Activated CD8-positive, alpha-beta T cell treated with anti-CD3 and anti-CD28 coated beads, Interleukin-2, amount 10 ng/mL, durations not matched to agents 7 days and 5 days (primary cell): ENCODE measurements at regions of chr16 and their contacts with region 1.

Region 1: GRCh38 chr16:22001591-22001990 is 675 bp upstream of the PDZD9 start:
- DNase-seq: no peak
- ATAC-seq: no peak
- H3K4me3 Mint-ChIP-seq: no peak overlapping the region
- H3K27ac Mint-ChIP-seq: no peak overlapping the region
- H3K4me1 Mint-ChIP-seq: peaks cover 11% of the 10 kb centered on the region
- H3K27me3 Mint-ChIP-seq: no peaks in the 10 kb centered on the region

Region 2: DNA sequence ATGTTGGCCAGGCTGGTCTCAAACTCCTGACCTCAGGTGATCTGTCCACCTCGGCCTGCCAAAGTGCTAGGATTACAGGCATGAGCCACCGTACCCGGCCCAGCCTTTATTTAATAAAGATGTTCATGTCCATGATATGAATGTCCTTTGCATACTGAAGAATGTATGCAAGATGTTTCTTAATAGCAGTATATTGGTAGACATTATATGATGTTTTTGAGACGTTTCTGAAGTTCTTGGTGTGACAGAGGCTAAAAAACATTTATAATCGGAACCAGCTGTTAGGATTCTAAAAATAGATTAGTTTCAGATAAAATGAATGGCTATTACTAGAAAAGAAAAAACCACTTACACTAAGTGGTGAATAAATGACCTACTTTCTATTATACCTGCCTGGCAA is 12.5 kb before region 1 on chr16:
- CTCF ChIA-PET with region 1: interaction called, 15 read pairs
- POLR2A ChIA-PET with region 1: no interaction called
- DNase-seq: no peak
- ATAC-seq: no peak
- H3K4me3 Mint-ChIP-seq: no peak overlapping the region
- H3K27ac Mint-ChIP-seq: no peak overlapping the region
- H3K4me1 Mint-ChIP-seq: peaks cover 12% of the 10 kb centered on the region
- H3K27me3 Mint-ChIP-seq: no peaks in the 10 kb centered on the region

Region 3: GRCh38 chr16:22014271-22014873 is 12.8 kb after region 1 on chr16:
- CTCF ChIA-PET with region 1: interaction called, 14 read pairs
- POLR2A ChIA-PET with region 1: interaction called, 3 read pairs
- DNase-seq: no peak
- ATAC-seq: no peak
- H3K4me3 Mint-ChIP-seq: no peak overlapping the region
- H3K27ac Mint-ChIP-seq: no peak overlapping the region
- H3K4me1 Mint-ChIP-seq: peaks cover 26% of the 10 kb centered on the region
- H3K27me3 Mint-ChIP-seq: no peaks in the 10 kb centered on the region